Right ventricle myocardium inferior (tissue), 1 donor: ENCODE measurements at regions of chr5 and their contacts with region 1.

Region 1: DNA sequence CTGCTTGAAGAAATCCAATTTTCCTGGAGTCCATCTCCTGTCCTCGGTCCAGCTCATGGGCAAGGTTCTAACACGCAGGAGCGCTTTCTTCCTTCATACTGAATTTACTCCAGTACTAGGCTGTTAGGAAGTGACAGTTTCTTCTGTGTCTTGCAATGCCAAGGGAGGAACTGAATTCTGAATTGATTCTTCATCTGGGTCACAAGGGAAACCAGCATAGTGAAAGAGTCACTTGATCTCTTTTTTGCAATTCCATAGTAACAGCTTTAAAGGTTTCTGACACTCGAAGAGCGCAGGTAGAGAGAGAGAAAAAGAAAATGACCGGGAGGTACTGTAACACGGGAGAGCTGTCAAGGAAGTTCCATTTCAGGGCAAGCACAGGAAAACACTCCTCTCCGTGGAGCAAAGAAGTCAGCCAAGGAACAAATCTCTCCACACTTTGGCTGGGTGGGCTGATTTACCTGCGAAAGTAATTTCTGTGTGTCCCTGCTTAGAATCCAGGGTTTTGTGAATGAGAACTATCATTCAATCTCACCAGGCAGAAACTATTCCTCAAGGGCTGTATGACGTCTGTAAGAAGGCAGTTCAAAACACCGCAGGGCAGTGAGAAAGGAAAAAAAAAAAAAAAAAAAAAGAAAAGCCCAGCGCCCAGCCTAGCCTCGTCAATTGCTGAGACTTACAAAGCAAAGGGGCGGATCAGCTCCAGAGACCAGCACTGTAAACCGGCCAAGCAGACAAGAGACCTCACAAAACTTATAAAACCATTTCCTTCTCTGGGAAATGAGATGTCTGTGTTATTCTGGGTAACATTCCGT is 617.8 kb downstream of the PDE4D start:
- DNase-seq: no peak
- ATAC-seq: peak; percentile 89

Region 2: GRCh38 chr5:58648846-58649245 is 626.9 kb before region 1 on chr5:
- intact Hi-C with region 1: no loop called
- DNase-seq: no peak
- ATAC-seq: no peak

Region 3: DNA sequence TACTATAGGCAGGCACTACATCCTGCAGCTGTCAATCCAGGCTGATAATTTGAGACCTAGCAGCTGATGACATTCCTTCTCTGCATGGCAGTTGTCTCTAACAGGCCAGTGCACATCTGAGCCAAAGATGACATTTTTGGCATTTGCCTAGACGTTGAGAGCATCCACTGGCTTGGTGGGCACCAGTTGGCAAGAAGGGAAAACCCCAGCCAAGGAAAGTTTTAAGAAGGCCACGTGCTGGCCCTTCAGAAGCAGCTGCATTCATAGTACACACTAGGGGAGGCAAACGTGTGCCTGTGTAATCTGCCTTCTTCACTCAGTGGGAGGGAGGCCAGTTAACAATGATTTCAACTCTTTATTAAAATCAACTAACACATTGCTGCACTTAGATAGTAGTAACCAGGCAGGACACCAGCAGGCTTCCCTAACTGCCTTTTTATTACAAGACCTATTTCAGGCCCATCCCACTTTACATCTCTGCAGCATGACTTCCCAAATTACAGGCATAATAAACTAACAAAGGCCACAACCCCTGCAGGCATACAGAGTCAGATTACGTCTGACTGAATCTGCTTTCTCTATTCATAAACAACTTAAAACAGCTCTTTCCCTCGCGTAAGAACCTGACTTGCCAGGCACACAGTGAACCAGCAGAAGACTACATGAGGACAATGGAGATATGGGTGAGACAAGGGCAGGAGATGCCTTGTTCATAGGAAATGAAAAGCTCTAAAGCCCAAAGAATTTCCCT is 41.5 kb after region 1 on chr5:
- intact Hi-C with region 1: loop called (anchors 5 kb)
- DNase-seq: no peak
- ATAC-seq: peak; percentile 73